Activated CD4-positive, alpha-beta T cell treated with anti-CD3 and anti-CD28 coated beads for 36 hours (primary cell): ENCODE measurements at regions of chr1 and their contacts with region 1.

Region 1: DNA sequence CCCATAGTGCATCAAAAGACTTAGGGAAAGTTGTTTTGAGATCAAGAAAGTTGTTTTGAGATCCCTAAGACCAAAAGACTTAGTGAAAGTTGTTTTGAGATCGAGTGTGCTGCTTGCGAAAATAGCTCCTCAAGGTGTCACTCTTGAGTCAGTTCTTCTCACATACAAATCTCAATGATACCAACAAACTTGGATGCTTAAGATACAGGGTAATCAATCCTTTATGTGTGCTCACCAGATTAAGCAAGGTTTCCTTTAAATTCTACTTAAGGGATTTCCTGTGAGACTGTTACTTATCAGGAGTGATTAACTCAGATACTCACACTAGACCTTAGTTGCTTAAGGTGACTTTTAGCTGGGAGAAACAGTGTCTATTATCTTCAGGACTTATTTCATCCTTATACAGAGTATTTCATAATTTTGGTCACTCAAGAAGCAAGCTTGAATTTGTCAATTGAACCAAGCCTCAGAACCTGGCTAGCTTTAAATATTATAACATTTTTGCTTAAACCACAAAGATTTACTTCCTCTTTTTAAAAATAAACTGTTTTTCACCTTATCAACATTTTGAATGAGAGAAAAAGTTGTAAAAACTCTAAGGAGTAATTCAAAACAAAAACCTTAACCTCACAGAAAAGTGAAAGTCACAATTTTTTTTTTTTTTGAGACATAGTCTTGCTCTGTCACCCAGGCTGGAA is 8.0 kb upstream of the RLF start:
- DNase-seq: peak; percentile 40
- ATAC-seq: peak; percentile 72
- H3K4me3 Mint-ChIP-seq: no peak overlapping the region
- H3K27ac Mint-ChIP-seq: peak overlapping the region; percentile 48
- H3K4me1 Mint-ChIP-seq: peaks cover 7% of the 10 kb centered on the region
- H3K27me3 Mint-ChIP-seq: peaks cover 3% of the 10 kb centered on the region

Region 2: DNA sequence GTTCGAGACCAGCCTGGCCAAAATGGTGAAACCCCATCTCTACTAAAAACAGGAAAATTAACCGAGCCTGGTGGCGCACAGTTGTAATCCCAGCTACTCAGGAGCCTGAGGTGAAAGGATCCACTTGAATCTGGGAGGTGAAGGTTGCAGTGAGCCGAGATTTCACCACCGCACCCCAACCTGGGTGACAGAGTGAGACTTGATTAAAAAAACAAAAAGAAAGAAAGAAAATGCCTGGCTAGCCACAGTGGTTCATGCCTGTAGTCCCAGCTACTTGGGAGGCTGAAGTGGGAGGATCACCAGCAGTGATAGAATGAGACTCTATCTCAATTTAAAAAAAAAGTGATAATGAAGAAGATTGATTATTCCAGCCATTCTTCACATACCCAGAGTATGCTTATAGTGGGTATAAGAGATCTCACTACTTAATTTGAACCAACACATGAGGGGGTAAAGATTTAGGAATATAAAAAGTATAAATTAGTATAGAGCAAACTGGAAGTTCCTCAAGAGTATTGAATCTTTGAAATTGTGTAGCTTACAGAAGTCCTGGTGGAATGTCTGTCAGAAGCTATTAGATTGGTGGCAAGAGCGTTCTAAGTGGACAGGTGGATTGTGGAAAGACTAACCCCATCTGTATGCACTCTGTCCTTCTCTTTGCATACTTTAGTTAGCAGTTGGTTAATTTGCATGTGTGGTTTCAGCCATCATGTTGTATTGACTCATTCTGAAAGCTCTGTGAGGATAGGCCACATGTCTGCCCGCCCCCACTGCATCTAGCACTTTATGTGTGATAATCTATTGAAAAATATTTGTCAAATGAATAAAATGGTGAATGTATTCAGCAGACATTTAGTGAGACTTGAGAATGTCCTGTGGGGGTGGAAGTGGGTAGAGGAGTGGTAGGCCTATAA is 33.0 kb after region 1 on chr1:
- CTCF ChIA-PET with region 1: interaction called, 17 read pairs
- POLR2A ChIA-PET with region 1: no interaction called
- intact Hi-C with region 1: no loop called
- DNase-seq: peak; percentile 74
- ATAC-seq: peak; percentile 96
- H3K4me3 Mint-ChIP-seq: no peak overlapping the region
- H3K27ac Mint-ChIP-seq: peak overlapping the region; percentile 51
- H3K4me1 Mint-ChIP-seq: peaks cover 51% of the 10 kb centered on the region
- H3K27me3 Mint-ChIP-seq: no peaks in the 10 kb centered on the region

Region 3: GRCh38 chr1:40281853-40282252 is 128.6 kb after region 1 on chr1:
- CTCF ChIA-PET with region 1: interaction called, 15 read pairs
- POLR2A ChIA-PET with region 1: no interaction called
- intact Hi-C with region 1: no loop called
- DNase-seq: no peak
- ATAC-seq: no peak
- H3K4me3 Mint-ChIP-seq: no peak overlapping the region
- H3K27ac Mint-ChIP-seq: no peak overlapping the region
- H3K4me1 Mint-ChIP-seq: no peaks in the 10 kb centered on the region
- H3K27me3 Mint-ChIP-seq: no peaks in the 10 kb centered on the region

Region 4: DNA sequence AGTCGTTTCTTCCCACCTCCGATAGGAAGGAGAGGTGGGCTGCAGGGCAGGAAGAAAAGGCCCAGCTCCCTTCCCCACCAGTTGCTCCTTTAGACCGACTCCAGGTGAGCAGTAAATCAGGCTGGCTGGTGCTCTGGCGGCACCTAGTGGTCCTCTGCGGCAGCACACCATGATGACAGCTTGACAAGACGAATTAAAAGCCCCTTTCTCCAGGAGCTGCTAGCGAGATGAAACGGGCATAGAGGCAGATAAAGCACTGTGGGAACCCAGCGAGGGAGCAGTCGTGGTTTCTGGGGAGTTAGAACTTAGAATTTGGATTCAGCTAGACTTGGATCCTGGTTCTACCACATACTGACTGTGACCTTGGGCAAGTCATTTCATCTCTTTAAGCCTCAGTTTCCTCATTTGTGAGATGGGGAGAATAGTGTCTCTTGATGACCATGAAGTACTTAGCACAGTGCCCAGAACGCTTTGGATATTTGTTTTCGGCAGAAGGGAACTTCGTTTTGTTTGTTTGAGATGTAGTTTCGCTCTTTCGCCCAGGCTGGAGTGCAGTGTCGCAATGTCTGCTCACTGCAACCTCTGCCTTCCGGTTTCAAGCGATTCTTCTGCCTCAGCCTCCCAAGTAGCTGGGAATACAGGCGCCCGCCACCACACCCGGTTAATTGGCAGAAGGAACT is 185.7 kb after region 1 on chr1:
- CTCF ChIA-PET with region 1: interaction called, 198 read pairs
- POLR2A ChIA-PET with region 1: interaction called, 3 read pairs
- intact Hi-C with region 1: loop called (anchors 1 kb)
- DNase-seq: peak; percentile 94
- ATAC-seq: peak; percentile 85
- H3K4me3 Mint-ChIP-seq: peak overlapping the region; percentile 14
- H3K27ac Mint-ChIP-seq: peak overlapping the region; percentile 69
- H3K4me1 Mint-ChIP-seq: peaks cover 42% of the 10 kb centered on the region
- H3K27me3 Mint-ChIP-seq: no peaks in the 10 kb centered on the region

Region 5: DNA sequence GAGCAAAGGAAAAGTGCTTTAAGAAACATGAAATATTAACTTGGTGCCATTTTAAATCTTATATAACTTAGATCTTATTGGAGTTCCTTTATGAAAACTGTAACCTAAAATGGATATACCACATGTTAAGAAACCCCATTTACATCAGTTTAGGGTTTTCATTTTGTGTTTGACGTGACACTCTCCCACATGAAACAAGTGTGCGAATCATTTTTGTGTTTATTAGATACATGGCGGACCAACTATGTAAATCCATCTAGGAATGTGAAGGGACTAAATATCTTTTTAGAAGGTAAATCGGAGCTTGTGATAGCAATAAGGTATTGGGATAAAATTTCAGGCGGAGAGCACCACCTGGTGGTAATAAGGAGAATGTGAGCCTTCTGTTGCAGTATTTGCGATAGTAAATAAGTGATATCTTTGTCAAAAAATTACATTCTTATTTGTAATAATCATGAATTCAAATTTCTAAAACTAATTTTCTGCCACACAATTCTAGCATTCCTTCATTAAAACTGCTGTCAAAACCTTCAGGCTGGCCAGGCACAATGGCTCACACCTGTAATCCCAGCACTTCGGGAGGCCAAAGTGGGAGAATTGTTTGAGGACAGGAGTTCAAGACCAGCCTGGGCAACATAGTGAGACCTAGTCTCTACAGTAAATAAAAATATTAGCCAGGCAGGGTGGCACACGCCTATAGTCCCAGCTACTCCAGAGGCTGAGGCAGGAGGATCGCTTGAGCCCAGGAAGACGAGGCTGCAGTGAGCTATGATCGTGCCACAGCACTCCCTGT is 251.6 kb after region 1 on chr1:
- CTCF ChIA-PET with region 1: interaction called, 32 read pairs
- POLR2A ChIA-PET with region 1: no interaction called
- intact Hi-C with region 1: loop called (anchors 1 to 2 kb)
- DNase-seq: peak; percentile 61
- ATAC-seq: peak; percentile 34
- H3K4me3 Mint-ChIP-seq: peak overlapping the region; percentile 3
- H3K27ac Mint-ChIP-seq: peak overlapping the region; percentile 91
- H3K4me1 Mint-ChIP-seq: peaks cover 64% of the 10 kb centered on the region
- H3K27me3 Mint-ChIP-seq: no peaks in the 10 kb centered on the region

Region 6: GRCh38 chr1:40438391-40439015 is 285.3 kb after region 1 on chr1:
- CTCF ChIA-PET with region 1: interaction called, 15 read pairs
- POLR2A ChIA-PET with region 1: no interaction called
- intact Hi-C with region 1: no loop called
- DNase-seq: peak; percentile 34
- ATAC-seq: peak; percentile 58
- H3K4me3 Mint-ChIP-seq: no peak overlapping the region
- H3K27ac Mint-ChIP-seq: no peak overlapping the region
- H3K4me1 Mint-ChIP-seq: peaks cover 3% of the 10 kb centered on the region
- H3K27me3 Mint-ChIP-seq: no peaks in the 10 kb centered on the region